Kidney (tissue), 22 donors: ENCODE measurements at regions of chr11 and their contacts with region 1.

Region 1: GRCh38 chr11:24896118-24896835 is 399.4 kb downstream of the LUZP2 start:
- DNase-seq: peak in 1 of 5 donors; percentile 67
- H3K4me3 ChIP-seq: no peak overlapping the region
- H3K27ac ChIP-seq: no peak overlapping the region
- H3K4me1 ChIP-seq: no peaks in the 10 kb centered on the region
- H3K27me3 ChIP-seq: no peaks in the 10 kb centered on the region
- CTCF ChIP-seq: no peak

Region 2: GRCh38 chr11:24833573-24833972 is 62.7 kb before region 1 on chr11:
- intact Hi-C with region 1: loop called (anchors 10 kb)
- DNase-seq: peak in 1 of 5 donors; percentile 2
- H3K4me3 ChIP-seq: no peak overlapping the region
- H3K27ac ChIP-seq: no peak overlapping the region
- H3K4me1 ChIP-seq: no peaks in the 10 kb centered on the region
- H3K27me3 ChIP-seq: no peaks in the 10 kb centered on the region
- CTCF ChIP-seq: no peak